CD8-positive, alpha-beta T cell (primary cell): ENCODE measurements at regions of chr1 and their contacts with region 1.

Region 1: DNA sequence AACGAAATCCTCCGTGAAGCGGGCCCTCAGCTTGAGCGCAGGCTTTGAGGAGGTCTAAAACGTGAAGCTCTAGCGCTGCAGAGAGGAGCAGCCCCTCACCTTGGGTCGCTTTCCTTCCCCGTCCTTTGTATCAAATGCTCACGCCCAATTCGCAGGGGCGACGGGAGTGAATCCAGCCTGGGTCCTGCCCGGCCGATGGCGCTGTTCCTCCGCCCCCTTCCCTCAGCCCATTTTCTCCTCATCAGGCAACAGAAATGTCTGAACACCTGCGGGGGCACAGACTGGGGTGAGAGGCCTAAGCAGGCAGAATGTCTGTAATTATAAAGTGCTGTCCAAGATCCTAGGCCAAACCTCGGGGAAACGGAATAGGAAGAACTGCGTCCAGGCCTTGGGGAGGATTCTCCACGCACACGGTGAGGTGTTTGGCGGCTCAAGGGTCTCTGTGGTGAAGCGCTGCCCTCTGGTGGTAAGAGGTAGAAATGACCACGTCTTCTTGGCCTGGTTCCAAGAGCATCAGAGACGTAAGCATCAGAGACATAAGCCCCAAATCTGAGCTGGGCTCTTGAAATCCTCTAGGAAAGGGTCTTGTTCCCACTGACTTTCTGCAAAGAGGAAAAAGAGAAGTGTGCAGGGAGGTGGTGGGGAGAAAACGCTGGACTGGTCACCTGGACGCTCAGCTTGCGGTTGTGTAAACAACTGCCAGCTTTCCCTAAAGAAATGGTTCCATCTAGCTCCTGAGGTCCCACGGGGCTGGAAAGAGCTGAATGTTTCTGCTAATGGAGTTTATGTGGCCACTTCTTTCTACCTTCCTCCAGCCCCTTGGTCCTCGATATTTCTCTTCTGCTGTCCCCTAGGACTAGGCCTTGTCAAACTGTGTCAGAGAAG is 92.1 kb upstream of the CD53 start:
- DNase-seq: peak; percentile 59 to 88 (median 76)
- ATAC-seq: peak; percentile 81
- H3K4me3 ChIP-seq: no peak overlapping the region
- H3K4me3 Mint-ChIP-seq: no peak overlapping the region
- H3K27ac ChIP-seq: no peak overlapping the region
- H3K27ac Mint-ChIP-seq: no peak overlapping the region
- H3K4me1 ChIP-seq: peaks cover 39% of the 10 kb centered on the region
- H3K4me1 Mint-ChIP-seq: peaks cover 46% of the 10 kb centered on the region
- H3K27me3 ChIP-seq: no peaks in the 10 kb centered on the region
- H3K27me3 Mint-ChIP-seq: peaks cover 5% of the 10 kb centered on the region
- CTCF ChIP-seq: peak; percentile 81

Region 2: GRCh38 chr1:109959974-109960744 is 820.7 kb before region 1 on chr1:
- CTCF ChIA-PET with region 1: no interaction called
- POLR2A ChIA-PET with region 1: no interaction called
- intact Hi-C with region 1: no loop called
- DNase-seq: no peak
- ATAC-seq: no peak
- H3K4me3 ChIP-seq: no peak overlapping the region
- H3K4me3 Mint-ChIP-seq: no peak overlapping the region
- H3K27ac ChIP-seq: no peak overlapping the region
- H3K27ac Mint-ChIP-seq: no peak overlapping the region
- H3K4me1 ChIP-seq: no peaks in the 10 kb centered on the region
- H3K4me1 Mint-ChIP-seq: no peaks in the 10 kb centered on the region
- H3K27me3 ChIP-seq: peaks cover 0 to 2% of the 10 kb centered on the region in 2 experiments
- H3K27me3 Mint-ChIP-seq: peaks cover 3% of the 10 kb centered on the region
- CTCF ChIP-seq: no peak

Region 3: DNA sequence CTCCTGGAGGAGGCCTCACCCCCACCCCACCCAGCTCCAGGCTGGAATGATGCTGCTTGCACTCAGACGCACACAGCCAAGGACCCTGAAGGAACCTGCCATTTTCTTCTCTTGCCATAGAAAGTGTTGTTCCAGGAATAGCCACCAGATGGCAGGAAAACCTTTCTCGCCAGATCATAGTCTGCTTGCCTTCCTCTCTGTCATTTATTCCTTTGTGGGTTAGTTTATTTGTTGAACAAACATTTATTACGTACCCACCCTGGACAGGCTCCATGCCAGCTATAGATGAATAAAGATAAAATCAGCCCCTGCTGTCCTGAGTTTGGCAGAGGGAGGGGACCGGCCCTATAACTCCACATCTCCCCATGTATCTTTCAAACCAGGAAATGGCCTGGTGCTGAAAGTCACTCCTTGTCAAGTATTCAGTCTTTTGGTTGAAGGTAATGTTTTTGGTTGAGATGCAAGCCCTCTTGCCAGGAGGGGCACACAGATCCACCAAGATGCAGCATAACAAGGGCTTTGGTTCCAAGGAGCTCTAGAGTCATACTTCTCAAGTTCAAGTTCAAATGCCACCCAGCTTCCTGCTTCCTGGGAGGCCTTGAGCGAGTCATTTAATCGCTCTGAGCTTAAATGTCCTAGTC is 577.7 kb before region 1 on chr1:
- CTCF ChIA-PET with region 1: no interaction called
- POLR2A ChIA-PET with region 1: no interaction called
- intact Hi-C with region 1: loop called (anchors 5 kb)
- DNase-seq: peak; percentile 43 to 86 (median 68)
- ATAC-seq: peak; percentile 80
- H3K4me3 ChIP-seq: no peak overlapping the region
- H3K4me3 Mint-ChIP-seq: no peak overlapping the region
- H3K27ac ChIP-seq: peak overlapping the region in 1 of 2 experiments; percentile 64
- H3K27ac Mint-ChIP-seq: peak overlapping the region; percentile 90
- H3K4me1 ChIP-seq: peaks cover 22% of the 10 kb centered on the region
- H3K4me1 Mint-ChIP-seq: peaks cover 25% of the 10 kb centered on the region
- H3K27me3 ChIP-seq: no peaks in the 10 kb centered on the region
- H3K27me3 Mint-ChIP-seq: no peaks in the 10 kb centered on the region
- CTCF ChIP-seq: peak; percentile 82

Region 4: GRCh38 chr1:110554871-110555801 is 225.7 kb before region 1 on chr1:
- CTCF ChIA-PET with region 1: interaction called, 56 read pairs
- POLR2A ChIA-PET with region 1: no interaction called
- intact Hi-C with region 1: loop called in 1 of 2 experiments (anchors 1 kb)
- DNase-seq: peak; percentile 24 to 75 (median 57)
- ATAC-seq: peak; percentile 97
- H3K4me3 ChIP-seq: peak overlapping the region in 1 of 2 experiments; percentile 23
- H3K4me3 Mint-ChIP-seq: peak overlapping the region; percentile 27
- H3K27ac ChIP-seq: no peak overlapping the region
- H3K27ac Mint-ChIP-seq: no peak overlapping the region
- H3K4me1 ChIP-seq: peaks cover 5% of the 10 kb centered on the region
- H3K4me1 Mint-ChIP-seq: peaks cover 4% of the 10 kb centered on the region
- H3K27me3 ChIP-seq: no peaks in the 10 kb centered on the region
- H3K27me3 Mint-ChIP-seq: peaks cover 44% of the 10 kb centered on the region
- CTCF ChIP-seq: peak; percentile 58

Region 5: DNA sequence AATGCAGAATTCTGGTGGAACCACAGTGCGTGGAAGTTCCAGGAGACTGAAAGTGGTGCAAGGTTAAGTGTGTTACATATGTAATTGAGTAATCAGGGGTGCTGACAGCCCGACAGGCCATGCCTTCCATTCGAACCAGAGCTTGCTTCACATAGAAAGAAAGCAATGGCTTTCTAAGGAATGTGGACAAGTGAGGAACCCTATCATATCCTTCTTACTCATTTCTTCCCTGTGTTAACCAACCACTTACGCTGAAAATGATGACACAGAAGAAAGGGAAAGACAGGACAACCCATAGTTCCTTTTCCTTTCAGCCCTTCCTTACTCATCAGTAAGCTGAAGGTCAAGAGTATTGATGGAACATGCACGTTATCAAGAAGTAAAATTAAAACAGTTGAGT is 58.0 kb before region 1 on chr1:
- CTCF ChIA-PET with region 1: no interaction called
- POLR2A ChIA-PET with region 1: no interaction called
- intact Hi-C with region 1: no loop called
- DNase-seq: no peak
- ATAC-seq: no peak
- H3K4me3 ChIP-seq: no peak overlapping the region
- H3K4me3 Mint-ChIP-seq: no peak overlapping the region
- H3K27ac ChIP-seq: no peak overlapping the region
- H3K27ac Mint-ChIP-seq: no peak overlapping the region
- H3K4me1 ChIP-seq: peaks cover 19% of the 10 kb centered on the region
- H3K4me1 Mint-ChIP-seq: peaks cover 22% of the 10 kb centered on the region
- H3K27me3 ChIP-seq: no peaks in the 10 kb centered on the region
- H3K27me3 Mint-ChIP-seq: peaks cover 2% of the 10 kb centered on the region
- CTCF ChIP-seq: no peak

Region 6: GRCh38 chr1:110756506-110756905 is 24.3 kb before region 1 on chr1:
- CTCF ChIA-PET with region 1: interaction called, 10 read pairs
- POLR2A ChIA-PET with region 1: no interaction called
- intact Hi-C with region 1: no loop called
- DNase-seq: no peak
- ATAC-seq: no peak
- H3K4me3 ChIP-seq: no peak overlapping the region
- H3K4me3 Mint-ChIP-seq: no peak overlapping the region
- H3K27ac ChIP-seq: no peak overlapping the region
- H3K27ac Mint-ChIP-seq: no peak overlapping the region
- H3K4me1 ChIP-seq: no peaks in the 10 kb centered on the region
- H3K4me1 Mint-ChIP-seq: no peaks in the 10 kb centered on the region
- H3K27me3 ChIP-seq: no peaks in the 10 kb centered on the region
- H3K27me3 Mint-ChIP-seq: peaks cover 6% of the 10 kb centered on the region
- CTCF ChIP-seq: no peak

Region 7: DNA sequence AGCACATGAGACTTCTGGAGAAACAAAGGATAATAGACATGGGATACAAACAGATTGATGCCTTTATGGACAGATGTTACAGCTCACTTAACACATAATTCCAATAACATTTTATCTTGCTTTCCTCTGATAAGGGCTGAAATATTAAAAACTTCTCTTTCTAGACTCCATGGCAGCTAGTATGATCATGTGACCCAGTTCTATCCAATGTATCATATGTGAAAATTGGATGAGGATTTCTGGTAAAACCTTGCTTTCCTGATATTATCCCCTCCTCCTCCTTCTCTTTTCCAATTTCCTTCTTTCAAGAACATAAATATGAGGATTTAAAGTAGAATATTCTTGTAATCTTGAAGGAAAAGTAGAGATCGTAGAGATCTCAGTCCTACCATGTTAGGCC is 35.3 kb after region 1 on chr1:
- CTCF ChIA-PET with region 1: interaction called, 10 read pairs
- POLR2A ChIA-PET with region 1: no interaction called
- intact Hi-C with region 1: no loop called
- DNase-seq: no peak
- ATAC-seq: no peak
- H3K4me3 ChIP-seq: no peak overlapping the region
- H3K4me3 Mint-ChIP-seq: no peak overlapping the region
- H3K27ac ChIP-seq: no peak overlapping the region
- H3K27ac Mint-ChIP-seq: no peak overlapping the region
- H3K4me1 ChIP-seq: no peaks in the 10 kb centered on the region
- H3K4me1 Mint-ChIP-seq: peaks cover 8% of the 10 kb centered on the region
- H3K27me3 ChIP-seq: no peaks in the 10 kb centered on the region
- H3K27me3 Mint-ChIP-seq: no peaks in the 10 kb centered on the region
- CTCF ChIP-seq: no peak

Region 8: GRCh38 chr1:110986407-110986891 is 205.6 kb after region 1 on chr1:
- CTCF ChIA-PET with region 1: interaction called, 41 read pairs
- POLR2A ChIA-PET with region 1: no interaction called
- intact Hi-C with region 1: no loop called
- DNase-seq: peak in 1 of 9 experiments; percentile 11
- ATAC-seq: no peak
- H3K4me3 ChIP-seq: no peak overlapping the region
- H3K4me3 Mint-ChIP-seq: no peak overlapping the region
- H3K27ac ChIP-seq: no peak overlapping the region
- H3K27ac Mint-ChIP-seq: no peak overlapping the region
- H3K4me1 ChIP-seq: peaks cover 7% of the 10 kb centered on the region
- H3K4me1 Mint-ChIP-seq: peaks cover 18% of the 10 kb centered on the region
- H3K27me3 ChIP-seq: no peaks in the 10 kb centered on the region
- H3K27me3 Mint-ChIP-seq: peaks cover 2% of the 10 kb centered on the region
- CTCF ChIP-seq: no peak

Region 9: GRCh38 chr1:111062081-111062480 is 281.2 kb after region 1 on chr1:
- CTCF ChIA-PET with region 1: no interaction called
- POLR2A ChIA-PET with region 1: no interaction called
- intact Hi-C with region 1: no loop called
- DNase-seq: no peak
- ATAC-seq: no peak
- H3K4me3 ChIP-seq: no peak overlapping the region
- H3K4me3 Mint-ChIP-seq: no peak overlapping the region
- H3K27ac ChIP-seq: no peak overlapping the region
- H3K27ac Mint-ChIP-seq: no peak overlapping the region
- H3K4me1 ChIP-seq: no peaks in the 10 kb centered on the region
- H3K4me1 Mint-ChIP-seq: no peaks in the 10 kb centered on the region
- H3K27me3 ChIP-seq: no peaks in the 10 kb centered on the region
- H3K27me3 Mint-ChIP-seq: peaks cover 8% of the 10 kb centered on the region
- CTCF ChIP-seq: no peak